Esophagus muscularis mucosa (tissue), 4 donors: ENCODE measurements at regions of chr14 and their contacts with region 1.

Region 1: GRCh38 chr14:99604283-99604765 is 317 bp upstream of the CCDC85C start:
- DNase-seq: peak; percentile 97
- H3K4me3 ChIP-seq: peak overlapping the region; percentile 70 to 85 (median 78)
- H3K27ac ChIP-seq: peak overlapping the region; percentile 92 to 95 (median 93)
- H3K4me1 ChIP-seq: peaks cover 41 to 66% (median 56%) of the 10 kb centered on the region in 4 donors
- H3K27me3 ChIP-seq: no peaks in the 10 kb centered on the region
- CTCF ChIP-seq: peak in 1 of 3 experiments; percentile 14
- EP300 ChIP-seq: no peak
- POLR2A ChIP-seq: no peak

Region 2: DNA sequence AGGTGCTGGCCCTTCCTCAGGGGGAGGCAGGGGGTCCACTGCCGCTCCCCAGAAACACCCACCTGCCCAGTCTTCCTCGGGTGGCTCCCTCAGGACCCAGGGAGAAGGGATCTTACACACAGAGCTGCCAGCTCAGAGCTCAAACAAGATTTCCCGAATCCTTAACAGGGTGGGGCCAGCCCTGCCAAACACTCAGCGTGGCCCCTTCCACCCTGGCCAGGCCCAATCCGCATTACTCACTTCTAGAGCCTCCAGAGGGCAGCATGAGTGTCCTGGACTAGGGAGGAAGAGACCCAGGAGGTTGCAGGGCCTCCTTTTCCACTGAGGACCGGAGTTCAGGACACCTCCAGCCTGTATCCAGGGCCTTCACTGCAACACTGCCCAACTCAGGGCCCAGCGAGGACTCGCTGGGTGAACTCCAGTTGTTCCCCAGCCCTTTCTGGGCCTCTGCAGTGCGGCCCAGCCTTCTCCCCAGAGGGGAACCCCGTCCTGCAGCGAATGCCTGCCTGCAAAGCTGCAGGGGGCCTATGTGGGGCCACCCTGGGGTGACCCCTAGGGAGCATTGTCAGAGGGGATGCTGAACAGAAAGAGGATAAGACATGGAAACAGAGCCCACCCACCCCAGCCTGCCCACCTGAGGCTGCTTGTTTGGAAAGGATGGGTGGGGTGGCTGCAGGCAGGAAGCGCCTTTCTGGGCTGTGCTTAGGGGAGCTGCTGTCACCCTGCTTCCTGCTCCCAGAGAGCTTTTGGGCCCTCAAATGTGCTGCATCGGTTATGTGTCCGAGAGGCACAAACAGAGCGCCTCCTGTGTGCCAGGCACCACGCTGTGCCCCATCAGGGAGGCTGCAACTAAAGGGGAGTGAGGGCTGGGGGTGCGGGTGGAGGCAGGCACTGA is 79.3 kb before region 1 on chr14:
- intact Hi-C with region 1: loop called (anchors 2 kb)
- DNase-seq: no peak
- H3K4me3 ChIP-seq: no peak overlapping the region
- H3K27ac ChIP-seq: peak overlapping the region; percentile 77 to 84 (median 83)
- H3K4me1 ChIP-seq: peaks cover 44 to 80% (median 55%) of the 10 kb centered on the region in 4 donors
- H3K27me3 ChIP-seq: no peaks in the 10 kb centered on the region
- CTCF ChIP-seq: peak; percentile 42 to 49 (median 47)
- EP300 ChIP-seq: no peak
- POLR2A ChIP-seq: no peak

Region 3: GRCh38 chr14:99568567-99569560 is 35.5 kb before region 1 on chr14:
- intact Hi-C with region 1: loop called (anchors 5 kb)
- DNase-seq: no peak
- H3K4me3 ChIP-seq: no peak overlapping the region
- H3K27ac ChIP-seq: peak overlapping the region; percentile 88 to 90 (median 90)
- H3K4me1 ChIP-seq: peaks cover 89 to 100% (median 100%) of the 10 kb centered on the region in 4 donors
- H3K27me3 ChIP-seq: no peaks in the 10 kb centered on the region
- CTCF ChIP-seq: no peak
- EP300 ChIP-seq: no peak
- POLR2A ChIP-seq: no peak